MCF 10A (cell line): ENCODE measurements at regions of chr9 and their contacts with region 1.

Region 1: GRCh38 chr9:123102375-123103110 is 69.1 kb downstream of the GPR21 start:
- DNase-seq: peak; percentile 6
- H3K4me3 Mint-ChIP-seq: no peak overlapping the region
- H3K27ac Mint-ChIP-seq: no peak overlapping the region
- H3K4me1 Mint-ChIP-seq: no peaks in the 10 kb centered on the region
- H3K27me3 Mint-ChIP-seq: no peaks in the 10 kb centered on the region
- CTCF ChIP-seq: peak; percentile 23

Region 2: GRCh38 chr9:123091459-123091858 is 11.1 kb before region 1 on chr9:
- CTCF ChIA-PET with region 1: interaction called, 21 read pairs
- POLR2A ChIA-PET with region 1: no interaction called
- intact Hi-C with region 1: no loop called
- DNase-seq: no peak
- H3K4me3 Mint-ChIP-seq: no peak overlapping the region
- H3K27ac Mint-ChIP-seq: no peak overlapping the region
- H3K4me1 Mint-ChIP-seq: no peaks in the 10 kb centered on the region
- H3K27me3 Mint-ChIP-seq: no peaks in the 10 kb centered on the region
- CTCF ChIP-seq: no peak

Region 3: GRCh38 chr9:123157216-123157615 is 54.7 kb after region 1 on chr9:
- CTCF ChIA-PET with region 1: interaction called, 12 read pairs
- POLR2A ChIA-PET with region 1: no interaction called
- intact Hi-C with region 1: no loop called
- DNase-seq: peak; percentile 8
- H3K4me3 Mint-ChIP-seq: no peak overlapping the region
- H3K27ac Mint-ChIP-seq: no peak overlapping the region
- H3K4me1 Mint-ChIP-seq: peaks cover 5% of the 10 kb centered on the region
- H3K27me3 Mint-ChIP-seq: no peaks in the 10 kb centered on the region
- CTCF ChIP-seq: no peak

Region 4: DNA sequence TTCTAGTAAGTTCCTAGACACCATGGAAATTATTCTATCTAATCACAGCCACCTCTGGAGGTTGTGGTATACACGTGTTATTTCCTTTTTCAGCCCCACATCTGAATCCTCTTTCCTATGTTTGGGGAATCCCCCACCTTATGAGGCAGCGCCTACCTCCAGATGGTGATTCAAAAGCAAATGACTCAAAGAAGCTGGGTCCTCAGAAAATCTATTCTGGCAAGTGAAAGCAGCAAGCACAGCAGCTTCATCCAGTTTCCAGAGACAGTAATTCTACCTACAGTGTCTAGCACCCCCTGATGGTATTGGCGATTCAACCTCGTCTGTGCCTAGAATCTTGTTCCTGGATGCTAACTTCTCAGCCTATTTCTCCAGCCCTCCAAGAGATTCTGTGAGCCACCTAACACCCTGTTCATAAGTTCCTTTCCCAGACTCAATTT is 122.9 kb after region 1 on chr9:
- CTCF ChIA-PET with region 1: interaction called, 4 read pairs
- POLR2A ChIA-PET with region 1: no interaction called
- intact Hi-C with region 1: loop called (anchors 2 kb)
- DNase-seq: peak; percentile 71
- H3K4me3 Mint-ChIP-seq: no peak overlapping the region
- H3K27ac Mint-ChIP-seq: no peak overlapping the region
- H3K4me1 Mint-ChIP-seq: peaks cover 21% of the 10 kb centered on the region
- H3K27me3 Mint-ChIP-seq: no peaks in the 10 kb centered on the region
- CTCF ChIP-seq: peak; percentile 41